Activated CD4-positive, alpha-beta memory T cell treated with anti-CD3 and anti-CD28 coated beads for 36 hours (primary cell): ENCODE measurements at regions of chr5 and their contacts with region 1.

Region 1: GRCh38 chr5:14424011-14424685 is 157.4 kb upstream of the OTULINL start:
- DNase-seq: peak; percentile 61
- H3K4me3 Mint-ChIP-seq: no peak overlapping the region
- H3K27ac Mint-ChIP-seq: peak overlapping the region; percentile 64
- H3K4me1 Mint-ChIP-seq: peaks cover 21% of the 10 kb centered on the region
- H3K27me3 Mint-ChIP-seq: peaks cover 1% of the 10 kb centered on the region

Region 2: DNA sequence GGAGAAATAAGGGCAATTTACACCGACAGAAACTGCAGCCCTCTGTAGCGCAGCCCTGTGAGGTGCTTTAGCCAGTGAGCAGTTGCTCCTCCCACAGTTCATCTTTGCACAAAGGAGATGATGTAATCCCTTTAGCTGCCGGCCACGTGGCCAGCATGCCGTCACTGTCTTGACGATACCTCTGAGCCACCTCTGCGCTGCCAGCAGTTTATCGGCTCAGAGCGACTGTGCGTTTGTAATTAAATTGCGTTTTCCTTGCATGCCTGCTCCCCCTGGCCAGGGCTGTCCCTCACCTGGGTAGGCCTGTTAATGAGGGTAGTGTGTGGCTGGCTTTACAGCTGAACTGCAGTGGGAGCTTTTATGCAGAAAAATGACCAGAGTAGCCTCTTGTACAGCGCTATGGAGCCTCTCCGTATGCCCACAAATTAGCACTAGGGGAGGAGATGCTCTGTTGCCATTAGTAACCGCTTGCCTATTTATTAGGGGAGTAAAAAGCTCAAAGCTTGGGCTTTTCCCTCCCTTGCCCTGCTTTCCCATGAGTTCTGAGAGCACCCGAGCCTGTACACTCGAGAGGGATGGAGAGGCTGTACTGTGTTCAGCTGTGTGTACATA is 174.0 kb before region 1 on chr5:
- CTCF ChIA-PET with region 1: no interaction called
- POLR2A ChIA-PET with region 1: no interaction called
- intact Hi-C with region 1: no loop called
- DNase-seq: no peak
- H3K4me3 Mint-ChIP-seq: no peak overlapping the region
- H3K27ac Mint-ChIP-seq: no peak overlapping the region
- H3K4me1 Mint-ChIP-seq: no peaks in the 10 kb centered on the region
- H3K27me3 Mint-ChIP-seq: peaks cover 8% of the 10 kb centered on the region

Region 3: DNA sequence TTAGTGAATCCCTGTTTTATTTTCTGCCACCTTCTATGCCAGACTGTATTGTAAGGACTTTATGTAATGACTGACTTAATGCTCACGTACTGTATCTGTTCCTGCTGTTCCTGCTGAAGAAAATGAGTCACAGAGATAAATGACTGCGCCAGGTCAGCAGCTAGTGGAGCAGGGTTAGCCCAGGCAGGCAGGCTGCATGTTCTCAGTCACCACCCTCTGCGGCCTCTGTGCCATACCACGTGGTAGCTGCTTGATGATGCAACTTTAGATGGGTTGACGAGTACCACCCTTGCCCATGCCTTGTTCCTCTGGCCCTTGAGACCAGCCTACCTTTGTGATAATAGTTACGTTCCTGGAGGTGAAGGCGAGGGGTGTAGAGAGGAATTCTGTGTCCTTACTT is 119.1 kb before region 1 on chr5:
- CTCF ChIA-PET with region 1: no interaction called
- POLR2A ChIA-PET with region 1: no interaction called
- intact Hi-C with region 1: no loop called
- DNase-seq: no peak
- H3K4me3 Mint-ChIP-seq: no peak overlapping the region
- H3K27ac Mint-ChIP-seq: no peak overlapping the region
- H3K4me1 Mint-ChIP-seq: no peaks in the 10 kb centered on the region
- H3K27me3 Mint-ChIP-seq: peaks cover 4% of the 10 kb centered on the region

Region 4: DNA sequence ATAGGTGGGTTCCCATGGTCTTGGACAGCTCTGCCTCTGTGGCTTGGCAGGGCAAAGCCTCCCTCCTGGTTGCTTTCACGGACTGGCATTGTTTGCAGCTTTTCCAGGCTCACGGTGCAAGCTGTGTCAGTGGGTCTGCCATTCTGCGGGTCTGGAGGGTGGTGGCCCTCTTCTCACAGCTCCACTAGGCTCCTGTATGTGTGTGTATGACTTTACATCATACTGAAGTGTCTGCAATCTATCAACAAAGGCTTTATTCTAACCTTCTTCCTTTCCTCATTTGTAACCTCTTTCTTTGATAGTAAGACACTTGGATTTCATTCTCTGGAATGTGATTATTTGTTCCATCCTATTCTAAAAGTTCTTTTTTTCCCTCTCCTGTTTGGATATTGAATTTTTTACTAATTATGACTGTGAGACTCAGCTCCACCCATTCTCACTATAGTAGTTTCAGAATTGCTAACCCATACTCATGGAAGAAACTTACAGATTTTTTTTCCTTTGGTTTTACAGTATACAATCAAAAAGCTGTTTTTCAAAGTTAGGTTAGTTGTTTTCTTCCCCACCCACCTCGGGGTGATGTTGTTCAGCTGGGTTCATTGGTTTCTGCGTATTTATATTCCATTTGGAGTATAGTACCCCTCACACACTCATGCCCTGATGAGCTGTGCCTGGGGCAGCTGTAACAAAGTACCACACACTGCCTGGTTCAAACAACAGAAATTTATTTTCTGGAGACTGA is 12.8 kb after region 1 on chr5:
- CTCF ChIA-PET with region 1: no interaction called
- POLR2A ChIA-PET with region 1: no interaction called
- intact Hi-C with region 1: loop called (anchors 1 kb)
- DNase-seq: no peak
- H3K4me3 Mint-ChIP-seq: no peak overlapping the region
- H3K27ac Mint-ChIP-seq: no peak overlapping the region
- H3K4me1 Mint-ChIP-seq: peaks cover 26% of the 10 kb centered on the region
- H3K27me3 Mint-ChIP-seq: peaks cover 12% of the 10 kb centered on the region

Region 5: DNA sequence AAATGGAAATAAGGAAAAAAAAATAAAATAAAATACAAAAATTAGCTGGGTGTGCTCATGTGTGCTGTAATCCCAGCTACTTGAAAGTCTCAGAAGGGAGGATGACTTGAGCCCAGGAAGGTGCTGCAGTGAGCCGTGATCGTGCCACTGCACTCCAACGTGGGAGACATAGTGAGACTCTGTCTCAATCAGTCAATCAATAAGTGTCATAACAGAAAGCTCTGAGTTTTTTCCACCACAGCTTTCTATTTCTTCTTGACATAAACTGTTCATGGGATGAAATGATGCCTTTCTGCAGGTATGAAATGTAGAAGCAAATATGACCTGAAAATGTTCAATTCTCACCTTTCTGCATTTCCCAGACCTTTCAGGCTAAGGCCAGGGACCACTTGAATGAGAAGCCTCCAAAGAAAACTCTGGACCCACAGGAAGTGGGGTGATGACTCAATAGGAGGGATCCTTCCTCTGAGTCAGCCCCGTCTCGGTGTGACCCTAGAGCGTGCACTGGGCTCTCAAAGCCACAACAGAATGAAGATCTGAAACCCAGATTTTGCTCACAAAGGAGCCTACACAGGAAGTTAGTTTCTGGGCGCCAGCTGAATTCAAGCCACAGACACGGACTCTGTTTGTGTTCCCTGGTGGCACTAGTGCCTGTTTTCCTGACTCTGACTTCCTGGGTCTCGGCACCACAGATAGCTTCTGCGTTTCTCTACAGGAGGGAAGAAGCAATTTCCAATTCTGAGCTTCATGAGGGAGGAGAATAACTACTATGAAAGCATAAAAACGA is 385.4 kb after region 1 on chr5:
- CTCF ChIA-PET with region 1: no interaction called
- POLR2A ChIA-PET with region 1: no interaction called
- intact Hi-C with region 1: no loop called
- DNase-seq: peak; percentile 90
- H3K4me3 Mint-ChIP-seq: peak overlapping the region; percentile 74
- H3K27ac Mint-ChIP-seq: peak overlapping the region; percentile 80
- H3K4me1 Mint-ChIP-seq: peaks cover 57% of the 10 kb centered on the region
- H3K27me3 Mint-ChIP-seq: no peaks in the 10 kb centered on the region